GM13977 (cell line): ENCODE measurements at regions of chr16 and their contacts with region 1.

Region 1: DNA sequence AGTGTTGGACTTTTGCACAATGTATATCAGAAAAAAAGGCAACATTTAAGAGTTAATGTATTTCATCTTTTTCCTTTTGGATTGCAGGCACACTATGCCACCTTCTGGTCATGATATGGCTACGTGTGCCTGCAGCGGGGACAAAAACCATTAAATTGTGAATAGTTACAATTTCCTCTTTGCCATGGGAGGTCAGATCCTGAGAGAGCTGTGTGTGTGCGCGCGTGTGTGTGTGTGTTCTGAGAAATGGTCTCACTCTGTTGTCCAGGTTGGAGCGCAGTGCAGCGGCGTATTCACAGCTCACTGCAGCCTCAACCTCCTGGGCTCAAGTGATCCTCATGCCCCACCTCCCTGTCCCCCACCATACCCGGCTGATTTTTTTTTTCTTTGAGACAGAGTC is 4.3 kb upstream of the SGF29 start:
- DNase-seq: no peak
- CTCF ChIP-seq: peak; percentile 57

Region 2: DNA sequence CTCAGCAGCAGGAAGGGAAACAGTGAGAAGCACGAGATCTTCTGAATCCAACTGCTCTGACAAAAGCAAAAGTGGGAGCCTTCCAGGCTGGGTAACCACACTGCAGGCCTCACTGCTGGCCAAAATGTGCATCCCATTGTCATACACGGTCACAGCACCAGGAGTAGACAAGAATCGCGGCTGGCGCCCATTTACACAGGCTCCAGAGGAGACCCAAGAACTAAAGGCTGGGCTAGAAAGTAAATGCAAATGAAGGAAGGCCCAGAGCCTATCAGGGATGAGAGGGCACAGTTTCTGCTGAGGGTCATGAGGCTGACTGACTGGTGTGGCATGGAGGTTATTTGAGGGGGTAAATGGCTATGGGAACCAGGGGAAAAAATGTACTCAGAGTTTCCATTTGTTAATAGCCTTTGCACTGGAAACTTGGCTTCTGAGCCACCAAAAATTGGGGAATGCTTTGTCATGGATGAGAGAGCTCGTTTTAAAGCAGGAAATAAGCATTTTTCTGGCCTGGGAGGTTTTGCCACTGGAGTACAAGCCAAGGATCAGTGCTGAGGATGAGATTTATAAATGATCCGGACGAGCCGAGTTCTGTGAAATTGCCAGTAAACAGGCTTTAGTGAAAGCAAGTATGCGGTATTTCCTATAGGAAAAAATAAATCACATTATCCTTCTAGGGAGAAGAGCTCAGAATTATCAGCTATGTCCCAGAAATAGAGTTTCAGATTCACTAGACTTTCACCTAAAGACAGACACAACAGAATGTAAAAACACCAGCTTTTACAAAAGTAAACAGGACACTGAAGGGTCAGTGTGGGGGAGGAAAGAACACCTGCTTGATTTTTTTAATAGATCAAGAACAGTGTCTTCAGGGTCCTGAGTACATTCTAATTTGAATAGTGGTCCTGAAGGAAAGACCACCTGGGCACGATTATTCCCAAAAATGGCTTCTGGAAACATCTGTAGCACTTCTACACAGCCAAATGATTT is 419.0 kb before region 1 on chr16:
- in situ Hi-C with region 1: no loop called
- DNase-seq: no peak
- CTCF ChIP-seq: no peak

Region 3: GRCh38 chr16:28317040-28317880 is 232.1 kb before region 1 on chr16:
- in situ Hi-C with region 1: loop called (anchors 25 kb)
- DNase-seq: peak; percentile 83
- CTCF ChIP-seq: peak; percentile 87